ENCODE measurements at regions of chr11 and their contacts with region 1.

Region 1: DNA sequence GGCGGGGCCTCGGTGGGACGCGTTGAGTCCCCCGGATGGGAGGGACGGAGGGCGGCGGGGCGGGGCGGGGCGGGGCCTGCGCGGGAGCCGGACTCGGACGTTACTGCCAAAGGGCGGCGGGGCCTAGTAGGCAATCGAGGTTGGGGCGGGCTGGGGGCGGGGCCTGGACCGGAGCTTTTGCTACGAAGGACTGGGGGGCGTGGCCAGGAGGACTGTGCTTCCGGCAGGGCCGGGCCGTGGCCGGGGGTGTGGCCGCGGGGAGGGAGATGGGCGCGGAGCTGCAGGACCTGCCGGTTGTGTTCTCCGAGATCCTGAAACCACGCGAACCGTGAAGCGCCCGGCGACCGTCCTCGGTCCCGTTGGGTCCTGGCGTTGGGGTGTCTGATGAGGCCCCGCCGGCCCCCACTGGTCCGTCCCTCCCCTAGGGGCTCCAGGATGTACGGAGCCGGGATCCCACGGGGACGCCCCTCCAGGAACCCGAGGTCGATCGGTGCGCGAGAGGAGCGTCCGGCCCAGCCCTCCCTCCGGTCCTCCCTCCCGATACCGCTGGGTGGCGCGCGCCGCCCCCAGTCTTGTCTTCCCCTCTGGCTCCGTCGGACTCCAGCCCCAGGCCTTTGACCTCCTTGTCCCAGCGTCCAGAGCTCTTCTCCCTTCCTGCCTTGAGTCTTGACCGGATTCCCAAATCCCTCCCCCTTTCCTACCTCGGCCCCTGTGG is 648 bp upstream of the NUDT8 start:
- DNase-seq: peak; percentile 99
- ATAC-seq: peak; percentile 71
- H3K4me3 Mint-ChIP-seq: peak overlapping the region; percentile 81
- H3K27ac Mint-ChIP-seq: peak overlapping the region; percentile 94
- H3K4me1 Mint-ChIP-seq: peaks cover 25% of the 10 kb centered on the region
- H3K27me3 Mint-ChIP-seq: no peaks in the 10 kb centered on the region

Region 2: DNA sequence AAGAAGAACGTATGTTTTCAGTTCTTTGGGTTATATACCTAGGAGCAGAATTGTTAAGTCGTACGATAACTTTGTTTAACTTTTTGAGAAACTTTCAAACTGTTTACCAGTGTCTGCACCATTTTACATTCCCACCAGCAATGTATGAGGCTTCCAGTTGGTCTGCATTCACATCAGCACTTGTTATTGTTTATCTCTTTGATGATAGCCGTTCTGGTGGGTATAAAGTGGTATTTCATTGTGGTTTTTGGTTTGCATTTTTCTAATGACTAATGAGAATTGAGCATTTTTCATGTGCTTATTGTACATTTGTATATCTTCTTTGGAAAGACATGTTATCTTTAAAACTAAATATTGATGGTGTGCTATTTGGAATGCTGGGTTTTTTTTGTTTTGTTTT is 451.5 kb before region 1 on chr11:
- CTCF ChIA-PET with region 1: no interaction called
- POLR2A ChIA-PET with region 1: no interaction called
- DNase-seq: no peak
- ATAC-seq: no peak
- H3K4me3 Mint-ChIP-seq: no peak overlapping the region
- H3K27ac Mint-ChIP-seq: no peak overlapping the region
- H3K4me1 Mint-ChIP-seq: peaks cover 5% of the 10 kb centered on the region
- H3K27me3 Mint-ChIP-seq: no peaks in the 10 kb centered on the region

Region 3: GRCh38 chr11:67607202-67607906 is 23.0 kb before region 1 on chr11:
- CTCF ChIA-PET with region 1: interaction called, 90 read pairs
- POLR2A ChIA-PET with region 1: interaction called, 6 read pairs
- DNase-seq: no peak
- ATAC-seq: no peak
- H3K4me3 Mint-ChIP-seq: peak overlapping the region; percentile 80
- H3K27ac Mint-ChIP-seq: peak overlapping the region; percentile 91
- H3K4me1 Mint-ChIP-seq: peaks cover 26% of the 10 kb centered on the region
- H3K27me3 Mint-ChIP-seq: peaks cover 10% of the 10 kb centered on the region

Region 4: GRCh38 chr11:67648140-67649123 is 18.0 kb after region 1 on chr11:
- CTCF ChIA-PET with region 1: interaction called, 111 read pairs
- POLR2A ChIA-PET with region 1: interaction called, 7 read pairs
- DNase-seq: peak; percentile 78
- ATAC-seq: peak; percentile 84
- H3K4me3 Mint-ChIP-seq: peak overlapping the region; percentile 36
- H3K27ac Mint-ChIP-seq: peak overlapping the region; percentile 95
- H3K4me1 Mint-ChIP-seq: peaks cover 60% of the 10 kb centered on the region
- H3K27me3 Mint-ChIP-seq: no peaks in the 10 kb centered on the region

Region 5: GRCh38 chr11:67663923-67664692 is 33.7 kb after region 1 on chr11:
- CTCF ChIA-PET with region 1: interaction called, 63 read pairs
- POLR2A ChIA-PET with region 1: no interaction called
- DNase-seq: no peak
- ATAC-seq: no peak
- H3K4me3 Mint-ChIP-seq: no peak overlapping the region
- H3K27ac Mint-ChIP-seq: no peak overlapping the region
- H3K4me1 Mint-ChIP-seq: peaks cover 2% of the 10 kb centered on the region
- H3K27me3 Mint-ChIP-seq: no peaks in the 10 kb centered on the region

Measured in activated CD8-positive, alpha-beta T cell treated with anti-CD3 and anti-CD28 coated beads, Interleukin-2, amount 10 ng/mL, durations not matched to agents 7 days and 5 days (primary cell).